Calu3 (cell line): ENCODE measurements at regions of chr1 and their contacts with region 1.

Region 1: GRCh38 chr1:231716026-231716722 is 89.6 kb downstream of the DISC1 start:
- DNase-seq: no peak
- H3K4me3 Mint-ChIP-seq: no peak overlapping the region
- H3K27ac Mint-ChIP-seq: no peak overlapping the region
- H3K4me1 Mint-ChIP-seq: no peaks in the 10 kb centered on the region
- H3K27me3 Mint-ChIP-seq: no peaks in the 10 kb centered on the region
- CTCF ChIP-seq: no peak

Region 2: GRCh38 chr1:231070758-231071444 is 645.3 kb before region 1 on chr1:
- CTCF ChIA-PET with region 1: interaction called, 10 read pairs
- intact Hi-C with region 1: no loop called
- DNase-seq: no peak
- H3K4me3 Mint-ChIP-seq: no peak overlapping the region
- H3K27ac Mint-ChIP-seq: no peak overlapping the region
- H3K4me1 Mint-ChIP-seq: no peaks in the 10 kb centered on the region
- H3K27me3 Mint-ChIP-seq: peaks cover 6% of the 10 kb centered on the region
- CTCF ChIP-seq: no peak

Region 3: GRCh38 chr1:232047474-232047873 is 331.3 kb after region 1 on chr1:
- CTCF ChIA-PET with region 1: no interaction called
- intact Hi-C with region 1: no loop called
- DNase-seq: no peak
- H3K4me3 Mint-ChIP-seq: no peak overlapping the region
- H3K27ac Mint-ChIP-seq: no peak overlapping the region
- H3K4me1 Mint-ChIP-seq: no peaks in the 10 kb centered on the region
- H3K27me3 Mint-ChIP-seq: no peaks in the 10 kb centered on the region
- CTCF ChIP-seq: no peak